Esophagus muscularis mucosa (tissue), 4 donors: ENCODE measurements at regions of chr22 and their contacts with region 1.

Region 1: DNA sequence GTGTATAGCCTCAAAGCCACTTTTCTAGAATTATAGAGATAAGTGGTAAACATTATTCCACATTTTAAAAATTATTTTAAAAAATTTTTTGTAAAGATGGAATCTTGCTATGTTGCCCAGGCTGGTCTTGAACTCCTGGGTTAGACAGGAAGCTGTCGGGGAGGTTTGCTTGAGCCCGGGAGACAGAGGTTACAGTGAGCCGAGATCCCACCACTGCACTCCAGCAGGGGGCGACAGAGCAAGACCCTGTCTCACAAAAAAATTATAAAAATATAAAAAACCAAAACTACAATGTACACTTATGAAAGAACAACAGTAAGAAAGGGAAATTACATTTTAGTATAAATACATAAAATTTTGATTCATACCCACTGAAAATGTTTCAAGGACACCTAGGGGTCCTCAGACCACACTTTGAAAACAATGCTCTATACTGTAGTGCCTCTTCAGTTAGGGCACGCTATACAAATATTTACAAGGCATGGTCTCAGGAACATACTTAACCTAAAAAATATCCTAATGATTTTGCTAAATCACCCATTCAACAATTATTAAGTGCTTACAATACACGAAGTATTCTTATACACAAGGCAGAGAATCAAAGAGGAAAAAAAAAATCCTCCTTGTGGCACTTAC is 111.2 kb downstream of the MRTFA start:
- DNase-seq: no peak
- H3K4me3 ChIP-seq: no peak overlapping the region
- H3K27ac ChIP-seq: no peak overlapping the region
- H3K4me1 ChIP-seq: peaks cover 6 to 28% (median 22%) of the 10 kb centered on the region in 4 donors
- H3K27me3 ChIP-seq: no peaks in the 10 kb centered on the region
- CTCF ChIP-seq: peak; percentile 65 to 75 (median 74)
- EP300 ChIP-seq: no peak
- POLR2A ChIP-seq: no peak

Region 2: DNA sequence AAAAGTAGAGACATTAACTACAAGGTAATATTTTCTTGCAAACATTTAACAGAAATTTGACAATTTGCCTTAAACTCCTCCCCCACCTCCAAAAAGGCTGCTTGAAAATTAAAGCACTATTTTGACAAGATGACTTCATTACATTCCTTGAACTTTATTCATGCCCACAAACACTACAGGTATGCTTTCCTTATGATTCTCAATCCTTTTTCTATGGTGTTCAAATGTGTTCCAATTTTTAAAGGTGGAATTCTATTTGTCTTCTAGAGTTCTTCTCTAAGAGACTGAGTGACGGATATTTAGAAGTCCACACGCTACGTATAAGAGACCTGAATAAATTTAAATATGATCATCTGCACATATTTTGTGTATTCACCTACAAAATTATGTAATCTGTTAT is 41.7 kb after region 1 on chr22:
- intact Hi-C with region 1: no loop called
- DNase-seq: no peak
- H3K4me3 ChIP-seq: no peak overlapping the region
- H3K27ac ChIP-seq: no peak overlapping the region
- H3K4me1 ChIP-seq: peaks cover 0 to 34% (median 18%) of the 10 kb centered on the region in 4 donors
- H3K27me3 ChIP-seq: no peaks in the 10 kb centered on the region
- CTCF ChIP-seq: no peak
- EP300 ChIP-seq: no peak
- POLR2A ChIP-seq: no peak

Region 3: GRCh38 chr22:40645579-40646197 is 120.3 kb after region 1 on chr22:
- intact Hi-C with region 1: loop called (anchors 2 kb)
- DNase-seq: no peak
- H3K4me3 ChIP-seq: no peak overlapping the region
- H3K27ac ChIP-seq: peak overlapping the region in 3 of 4 donors; percentile 51 to 69 (median 57)
- H3K4me1 ChIP-seq: peaks cover 4 to 12% (median 7%) of the 10 kb centered on the region in 4 donors
- H3K27me3 ChIP-seq: no peaks in the 10 kb centered on the region
- CTCF ChIP-seq: no peak
- EP300 ChIP-seq: no peak
- POLR2A ChIP-seq: no peak